ENCODE measurements at regions of chr1 and their contacts with region 1.

Region 1: DNA sequence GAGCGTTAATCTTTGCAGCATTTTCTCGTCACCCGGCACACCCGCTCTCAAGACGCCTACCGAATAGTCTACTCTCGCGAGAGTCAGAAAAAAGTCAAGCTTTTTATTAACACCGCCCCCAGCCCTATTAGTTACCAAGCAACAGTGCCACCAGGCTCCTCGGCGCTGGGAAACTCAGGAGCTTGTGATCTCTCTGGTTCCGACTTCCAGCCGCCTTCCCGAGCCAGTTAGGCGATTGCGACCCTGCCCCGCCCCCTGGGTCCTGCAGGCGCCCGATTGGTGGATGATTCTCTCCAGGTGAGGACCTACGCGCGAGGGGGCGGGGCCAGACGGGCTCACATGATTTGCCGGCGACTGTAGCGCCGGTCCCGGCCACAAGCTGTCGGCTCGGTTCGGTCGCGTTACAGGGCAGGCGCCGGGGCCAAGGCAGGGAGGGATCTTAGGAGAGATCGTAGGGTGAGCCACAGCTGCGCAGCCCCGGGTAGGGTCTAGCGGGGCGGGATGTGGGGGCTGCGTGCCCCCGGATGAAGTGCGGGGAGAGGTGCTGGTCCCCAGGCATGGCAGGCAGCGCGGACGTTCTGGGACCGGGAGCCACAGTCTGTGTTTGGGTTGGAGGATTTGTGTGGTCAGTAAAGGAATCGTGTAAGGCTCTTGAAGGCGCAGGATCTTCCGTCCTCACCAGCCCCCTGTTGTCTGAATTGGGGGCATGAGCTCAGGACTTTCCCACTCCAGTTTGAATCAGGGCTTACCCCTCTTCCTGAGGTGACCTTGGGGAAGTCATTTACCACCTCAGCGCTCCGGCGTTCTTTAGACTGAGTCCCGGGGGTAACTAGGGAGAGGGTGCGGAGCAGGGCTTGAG is at the start of gene PFKFB2:
- DNase-seq: peak; percentile 90
- H3K4me3 Mint-ChIP-seq: peak within 1 kb of the TSS; percentile 100
- H3K27ac Mint-ChIP-seq: peak within 1 kb of the TSS; percentile 82
- H3K4me1 Mint-ChIP-seq: peaks cover 53% of the 10 kb centered on the region
- H3K27me3 Mint-ChIP-seq: peaks cover 5% of the 10 kb centered on the region
- total RNA-seq, gene PFKFB2: 2.9 and 4.4 TPM in 2 replicates

Region 2: DNA sequence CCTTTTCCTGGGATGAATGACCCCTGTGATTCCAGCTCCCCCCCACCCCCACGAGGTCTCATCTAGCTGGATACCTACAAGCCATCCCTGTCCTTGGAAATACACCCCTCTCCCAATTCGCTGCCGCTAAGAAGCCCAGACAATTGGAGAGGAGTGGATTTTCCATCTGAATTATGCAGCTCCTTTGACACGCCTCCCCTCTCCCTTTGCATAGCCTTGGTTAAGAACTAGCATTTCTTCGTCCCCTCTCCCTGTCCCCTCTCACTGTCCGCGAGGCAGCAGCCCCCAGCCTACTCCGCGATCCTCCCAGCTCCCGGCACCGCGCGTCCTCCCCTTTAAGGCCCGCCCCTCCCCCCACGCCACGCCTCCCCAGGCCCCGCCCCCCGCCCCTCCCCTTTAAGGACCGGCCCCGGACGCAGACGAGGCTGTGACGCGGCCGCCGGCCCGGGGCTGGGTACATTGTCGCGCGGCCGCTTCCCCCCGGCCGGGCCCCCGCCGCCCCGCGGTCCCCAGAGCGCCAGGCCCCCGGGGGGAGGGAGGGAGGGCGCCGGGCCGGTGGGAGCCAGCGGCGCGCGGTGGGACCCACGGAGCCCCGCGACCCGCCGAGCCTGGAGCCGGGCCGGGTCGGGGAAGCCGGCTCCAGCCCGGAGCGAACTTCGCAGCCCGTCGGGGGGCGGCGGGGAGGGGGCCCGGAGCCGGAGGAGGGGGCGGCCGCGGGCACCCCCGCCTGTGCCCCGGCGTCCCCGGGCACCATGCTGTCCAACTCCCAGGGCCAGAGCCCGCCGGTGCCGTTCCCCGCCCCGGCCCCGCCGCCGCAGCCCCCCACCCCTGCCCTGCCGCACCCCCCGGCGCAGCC is 368.4 kb before region 1 on chr1 and contains the start of gene MAPKAPK2:
- intact Hi-C with region 1: loop called (anchors 1 kb)
- DNase-seq: peak; percentile 69
- H3K4me3 Mint-ChIP-seq: peak within 1 kb of the TSS; percentile 98
- H3K27ac Mint-ChIP-seq: peak within 1 kb of the TSS; percentile 96
- H3K4me1 Mint-ChIP-seq: peaks cover 72% of the 10 kb centered on the region
- H3K27me3 Mint-ChIP-seq: peaks cover 7% of the 10 kb centered on the region
- total RNA-seq, gene MAPKAPK2: 117 and 120 TPM in 2 replicates

Region 3: GRCh38 chr1:207077470-207078377 is 24.6 kb after region 1 on chr1:
- intact Hi-C with region 1: loop called (anchors 1 kb)
- DNase-seq: peak; percentile 60
- H3K4me3 Mint-ChIP-seq: no peak overlapping the region
- H3K27ac Mint-ChIP-seq: no peak overlapping the region
- H3K4me1 Mint-ChIP-seq: no peaks in the 10 kb centered on the region
- H3K27me3 Mint-ChIP-seq: peaks cover 19% of the 10 kb centered on the region

Region 4: DNA sequence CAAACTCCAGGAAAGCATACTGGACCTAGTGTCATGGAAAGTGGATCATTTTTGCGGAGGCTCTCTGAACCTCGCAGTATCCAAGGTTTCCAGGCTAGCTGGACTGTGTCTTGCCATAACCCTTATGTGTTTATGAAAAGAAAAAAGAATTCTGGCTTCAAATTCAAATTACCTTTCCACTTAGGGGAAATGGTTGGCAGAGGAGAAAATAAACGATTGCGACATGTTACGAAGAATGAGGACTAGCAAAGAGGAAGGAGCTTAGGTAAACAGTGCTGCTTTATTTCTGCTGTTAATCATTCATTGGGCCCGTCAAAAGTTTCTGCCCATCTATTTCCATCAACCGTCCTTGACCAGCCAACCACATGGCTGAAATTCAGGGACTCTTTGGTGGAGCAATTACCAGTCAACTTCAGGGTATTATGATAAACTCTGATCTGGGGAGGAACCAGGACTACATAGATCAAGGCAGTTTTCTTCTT is 50.8 kb after region 1 on chr1 and contains the start of gene C4BPA:
- intact Hi-C with region 1: no loop called
- DNase-seq: no peak
- H3K4me3 Mint-ChIP-seq: no peak within 1 kb of the TSS
- H3K27ac Mint-ChIP-seq: no peak within 1 kb of the TSS
- H3K4me1 Mint-ChIP-seq: no peaks in the 10 kb centered on the region
- H3K27me3 Mint-ChIP-seq: peaks cover 2% of the 10 kb centered on the region
- total RNA-seq, gene C4BPA: not detected in 2 replicates

Region 5: GRCh38 chr1:207404849-207405525 is 351.8 kb after region 1 on chr1:
- intact Hi-C with region 1: loop called (anchors 1 kb)
- DNase-seq: no peak
- H3K4me3 Mint-ChIP-seq: no peak overlapping the region
- H3K27ac Mint-ChIP-seq: no peak overlapping the region
- H3K4me1 Mint-ChIP-seq: peaks cover 21% of the 10 kb centered on the region
- H3K27me3 Mint-ChIP-seq: peaks cover 2% of the 10 kb centered on the region

Region 6: GRCh38 chr1:207751790-207752455 is 698.8 kb after region 1 on chr1 and contains the start of gene CD46:
- intact Hi-C with region 1: loop called (anchors 5 kb)
- DNase-seq: peak; percentile 93
- H3K4me3 Mint-ChIP-seq: peak within 1 kb of the TSS; percentile 98
- H3K27ac Mint-ChIP-seq: peak within 1 kb of the TSS; percentile 95
- H3K4me1 Mint-ChIP-seq: peaks cover 61% of the 10 kb centered on the region
- H3K27me3 Mint-ChIP-seq: no peaks in the 10 kb centered on the region
- total RNA-seq, gene CD46: 101 and 105 TPM in 2 replicates

Region 7: DNA sequence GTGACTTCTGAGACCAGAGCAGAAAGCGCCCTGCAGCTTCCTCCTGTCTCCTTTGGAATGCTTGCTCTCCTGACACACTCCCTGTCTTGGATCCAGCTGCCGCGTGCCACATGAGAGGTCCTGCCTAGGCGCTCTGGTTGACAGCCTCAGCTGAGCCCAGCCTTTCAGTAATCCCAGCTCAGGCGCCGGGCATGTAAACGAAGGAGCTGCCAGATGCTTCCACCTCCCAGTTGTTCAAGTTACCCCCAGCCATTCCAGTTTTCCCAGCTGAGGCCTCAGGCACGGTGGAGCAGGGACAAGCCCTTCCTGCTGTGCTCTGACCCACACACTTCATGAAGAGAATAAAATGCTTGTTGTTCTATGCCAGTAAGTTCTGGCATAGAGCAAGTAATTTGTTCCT is 872.1 kb after region 1 on chr1:
- intact Hi-C with region 1: no loop called
- DNase-seq: no peak
- H3K4me3 Mint-ChIP-seq: no peak overlapping the region
- H3K27ac Mint-ChIP-seq: no peak overlapping the region
- H3K4me1 Mint-ChIP-seq: no peaks in the 10 kb centered on the region
- H3K27me3 Mint-ChIP-seq: peaks cover 41% of the 10 kb centered on the region

Measured in activated T-helper 1 cell treated with anti-CD3 and anti-CD28 coated beads, Interleukin-12 subunit alpha, Interleukin-12 subunit beta, Interleukin-2, Interleukin-4 antibody, amounts not matched to agents 30 ng/mL and 10 ng/mL and 1 ng/mL, durations not matched to agents 14 hours and 24 hours and 36 hours (primary cell).